H1 (cell line): ENCODE measurements at regions of chr1 and their contacts with region 1.

Region 1: GRCh38 chr1:165597883-165598675 is 33.0 kb upstream of the MGST3 start:
- DNase-seq: peak; percentile 80 to 94
- H3K4me3 ChIP-seq: peak overlapping the region; percentile 78 to 95 (median 85)
- H3K27ac ChIP-seq: peak overlapping the region; percentile 56; the same call in 1 of the 2 replicates
- H3K4me1 ChIP-seq: peaks cover 0 to 4% (median 1%) of the 10 kb centered on the region in 4 experiments; a peak in 1 of 7 replicates
- H3K27me3 ChIP-seq: no peaks in the 10 kb centered on the region
- CTCF ChIP-seq: no peak
- EP300 ChIP-seq: no peak
- POLR2A ChIP-seq: peak in 1 of 2 experiments; percentile 40; a peak in 1 of 3 replicates
- RAD21 ChIP-seq: no peak

Region 2: DNA sequence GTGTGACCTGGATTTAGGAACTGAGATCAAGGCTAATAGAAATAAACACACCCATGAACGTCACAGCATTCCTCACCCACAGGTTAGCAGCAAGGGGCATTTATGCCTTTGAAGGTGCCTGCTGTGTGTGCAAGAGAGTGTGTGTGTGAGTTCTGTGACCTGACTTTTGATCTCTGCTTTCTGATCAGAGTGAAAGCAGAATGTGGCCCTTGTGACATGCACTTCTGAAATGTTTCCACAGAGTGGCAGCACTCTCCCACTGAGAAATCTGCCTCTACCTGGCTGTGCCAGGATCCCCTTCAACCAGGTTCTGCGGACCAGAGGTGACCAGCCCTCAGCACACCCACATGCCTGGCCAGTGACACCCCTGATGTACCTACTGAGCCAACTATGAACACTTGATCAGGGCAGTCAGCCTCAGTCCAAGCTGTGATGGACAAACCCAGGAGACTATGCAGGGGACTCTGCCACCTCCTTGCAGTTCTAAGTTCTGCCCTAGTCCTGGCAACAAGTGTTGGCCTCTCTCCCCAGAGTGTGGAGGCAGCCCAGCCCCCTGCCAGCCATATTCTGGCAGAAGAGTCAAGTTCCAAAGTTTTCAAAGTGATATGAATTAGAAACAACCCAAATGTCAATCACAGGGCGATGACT is 194.1 kb before region 1 on chr1:
- CTCF ChIA-PET with region 1: interaction called, 337 read pairs
- POLR2A ChIA-PET with region 1: interaction called, 3 read pairs
- DNase-seq: peak in 1 of 2 experiments; percentile 69
- H3K4me3 ChIP-seq: no peak overlapping the region
- H3K27ac ChIP-seq: no peak overlapping the region
- H3K4me1 ChIP-seq: no peaks in the 10 kb centered on the region
- H3K27me3 ChIP-seq: no peaks in the 10 kb centered on the region; a peak in 1 of 7 replicates
- CTCF ChIP-seq: peak; percentile 61 to 95 (median 89)
- EP300 ChIP-seq: no peak
- POLR2A ChIP-seq: no peak
- RAD21 ChIP-seq: peak; percentile 95 to 98

Region 3: GRCh38 chr1:165520646-165521045 is 77.4 kb before region 1 on chr1:
- CTCF ChIA-PET with region 1: no interaction called
- POLR2A ChIA-PET with region 1: no interaction called
- DNase-seq: no peak
- H3K4me3 ChIP-seq: no peak overlapping the region
- H3K27ac ChIP-seq: no peak overlapping the region
- H3K4me1 ChIP-seq: no peaks in the 10 kb centered on the region
- H3K27me3 ChIP-seq: no peaks in the 10 kb centered on the region
- CTCF ChIP-seq: no peak
- EP300 ChIP-seq: no peak
- POLR2A ChIP-seq: no peak
- RAD21 ChIP-seq: no peak

Region 4: GRCh38 chr1:165560883-165561656 is 37.0 kb before region 1 on chr1:
- CTCF ChIA-PET with region 1: interaction called, 10 read pairs
- POLR2A ChIA-PET with region 1: no interaction called
- DNase-seq: no peak
- H3K4me3 ChIP-seq: no peak overlapping the region
- H3K27ac ChIP-seq: no peak overlapping the region
- H3K4me1 ChIP-seq: peaks cover 0 to 6% (median 3%) of the 10 kb centered on the region in 4 experiments; a peak in 4 of 7 replicates
- H3K27me3 ChIP-seq: peaks cover 0 to 5% (median 0%) of the 10 kb centered on the region in 4 experiments; a peak in 3 of 7 replicates
- CTCF ChIP-seq: no peak
- EP300 ChIP-seq: no peak
- POLR2A ChIP-seq: no peak
- RAD21 ChIP-seq: no peak

Region 5: DNA sequence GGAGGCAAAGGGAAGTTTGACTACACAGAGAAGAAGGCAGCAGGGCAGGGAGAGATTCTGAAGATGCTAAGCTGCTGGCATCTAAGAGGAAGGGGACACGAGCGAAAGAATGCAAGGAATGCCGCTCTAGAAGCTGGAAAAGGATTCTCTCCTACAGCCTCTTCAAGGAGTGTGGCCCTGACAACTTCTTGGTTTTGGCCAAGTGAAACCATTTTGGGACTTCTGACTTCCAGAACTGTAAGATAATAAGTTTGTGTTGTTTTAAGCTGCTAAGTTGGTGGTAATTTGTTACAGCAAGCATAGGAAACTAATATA is 61.5 kb after region 1 on chr1:
- CTCF ChIA-PET with region 1: interaction called, 18 read pairs
- POLR2A ChIA-PET with region 1: interaction called, 3 read pairs
- DNase-seq: peak in 1 of 2 experiments; percentile 10
- H3K4me3 ChIP-seq: no peak overlapping the region
- H3K27ac ChIP-seq: 0 out of 2 replicates have a peak overlapping the region, but pooled peaks have one; percentile 22
- H3K4me1 ChIP-seq: no peaks in the 10 kb centered on the region; a peak in 1 of 7 replicates
- H3K27me3 ChIP-seq: no peaks in the 10 kb centered on the region
- CTCF ChIP-seq: no peak
- EP300 ChIP-seq: no peak
- POLR2A ChIP-seq: no peak
- RAD21 ChIP-seq: no peak

Region 6: GRCh38 chr1:165707984-165708706 is 110.1 kb after region 1 on chr1:
- CTCF ChIA-PET with region 1: interaction called, 11 read pairs
- POLR2A ChIA-PET with region 1: no interaction called
- DNase-seq: no peak
- H3K4me3 ChIP-seq: no peak overlapping the region
- H3K27ac ChIP-seq: no peak overlapping the region
- H3K4me1 ChIP-seq: no peaks in the 10 kb centered on the region
- H3K27me3 ChIP-seq: no peaks in the 10 kb centered on the region
- CTCF ChIP-seq: no peak
- EP300 ChIP-seq: no peak
- POLR2A ChIP-seq: no peak
- RAD21 ChIP-seq: no peak